Heart left ventricle (tissue), 16 donors: ENCODE measurements at regions of chr9 and their contacts with region 1.

Region 1: GRCh38 chr9:98899408-98900056 is 44.2 kb upstream of the COL15A1 start:
- DNase-seq: no peak
- ATAC-seq: peak in 1 of 4 donors; percentile 41
- H3K4me3 ChIP-seq: no peak overlapping the region
- H3K27ac ChIP-seq: no peak overlapping the region
- H3K4me1 ChIP-seq: peaks cover 0 to 34% (median 13%) of the 10 kb centered on the region in 12 donors
- H3K27me3 ChIP-seq: no peaks in the 10 kb centered on the region
- CTCF ChIP-seq: no peak
- POLR2A ChIP-seq: no peak

Region 2: DNA sequence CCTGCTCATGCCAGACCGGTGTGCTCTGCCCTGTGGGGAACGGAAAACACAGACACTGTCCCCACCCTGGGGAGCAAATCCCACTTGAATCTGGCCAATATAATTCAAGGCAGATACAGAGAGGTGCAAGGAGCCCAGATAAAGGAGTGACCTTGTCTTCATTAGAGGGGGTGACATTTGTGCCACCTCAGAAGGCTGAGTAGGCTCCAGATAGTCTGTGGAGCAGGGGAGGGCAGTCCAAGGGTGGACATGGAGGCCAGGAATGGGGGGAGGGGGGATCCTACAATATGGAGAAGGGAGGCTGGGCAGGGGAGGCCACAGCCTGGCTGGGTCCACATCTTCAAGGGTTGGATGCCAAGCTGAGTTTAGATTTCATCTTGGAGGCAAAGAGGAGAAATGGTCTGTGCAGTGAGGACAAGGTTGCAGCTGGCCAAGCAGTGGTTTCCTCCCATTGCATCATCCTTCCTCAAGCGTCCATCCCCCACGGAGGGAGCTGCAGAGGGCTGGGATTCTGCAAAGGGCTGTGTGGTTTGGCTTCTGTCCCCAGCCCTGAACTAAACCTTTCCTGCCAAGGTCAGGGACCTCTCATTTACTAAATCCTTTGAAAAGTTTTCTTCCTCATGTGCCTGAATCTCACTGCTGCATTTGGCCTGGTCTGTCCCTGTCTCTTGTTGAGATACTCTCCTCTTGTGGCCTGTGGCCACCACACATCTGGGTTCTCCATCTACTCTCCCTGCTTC is 31.9 kb before region 1 on chr9:
- intact Hi-C with region 1: loop called in 1 of 10 experiments (anchors 5 kb)
- DNase-seq: peak; percentile 86 to 93 (median 87)
- ATAC-seq: peak; percentile 84 to 92 (median 88)
- H3K4me3 ChIP-seq: no peak overlapping the region
- H3K27ac ChIP-seq: peak overlapping the region; percentile 43 to 92 (median 81)
- H3K4me1 ChIP-seq: peaks cover 0 to 71% (median 53%) of the 10 kb centered on the region in 12 donors
- H3K27me3 ChIP-seq: no peaks in the 10 kb centered on the region
- CTCF ChIP-seq: no peak
- POLR2A ChIP-seq: no peak

Region 3: DNA sequence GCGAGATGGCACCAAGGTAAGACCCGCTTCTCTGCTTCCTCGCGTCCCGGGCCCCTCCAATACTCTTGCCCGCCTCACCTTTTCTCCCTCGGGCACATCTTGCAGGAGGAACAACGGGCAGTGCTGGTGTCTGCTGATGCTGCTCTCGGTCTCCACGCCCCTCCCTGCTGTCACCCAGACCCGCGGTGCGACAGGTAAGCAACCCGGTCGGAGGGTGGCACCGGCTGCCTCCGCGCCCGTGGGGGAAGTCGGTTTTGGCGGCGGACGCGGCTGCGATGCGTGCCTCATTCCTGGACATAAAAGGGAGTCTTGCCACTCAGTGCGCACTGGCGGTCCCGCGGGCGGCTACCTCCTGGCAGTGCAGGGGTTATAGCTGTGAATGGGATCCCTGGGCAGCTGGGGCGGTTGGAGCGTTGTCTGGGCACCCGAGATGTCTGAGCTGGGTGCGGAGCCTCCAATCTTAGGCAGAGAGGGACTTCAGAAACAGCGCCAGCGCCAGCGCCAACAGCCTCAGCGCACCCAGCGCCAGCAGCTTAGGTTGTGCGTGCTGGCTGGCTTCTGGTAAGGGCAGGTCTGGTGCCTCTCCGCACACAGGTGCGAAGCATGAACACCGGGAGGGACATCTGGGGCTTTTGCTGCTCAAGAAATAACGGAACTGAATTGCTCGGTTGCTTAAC is 44.7 kb after region 1 on chr9:
- intact Hi-C with region 1: loop called in 1 of 10 experiments (anchors 5 kb)
- DNase-seq: peak in 3 of 5 donors; percentile 44 to 68 (median 61)
- ATAC-seq: peak in 3 of 4 donors; percentile 54 to 59 (median 57)
- H3K4me3 ChIP-seq: peak overlapping the region; percentile 46 to 89 (median 76)
- H3K27ac ChIP-seq: peak overlapping the region; percentile 24 to 93 (median 84)
- H3K4me1 ChIP-seq: peaks cover 3 to 61% (median 29%) of the 10 kb centered on the region in 12 donors
- H3K27me3 ChIP-seq: peaks cover 0 to 44% (median 0%) of the 10 kb centered on the region in 9 donors
- CTCF ChIP-seq: no peak
- POLR2A ChIP-seq: no peak